Endothelial cell of umbilical vein (primary cell): ENCODE measurements at regions of chr9 and their contacts with region 1.

Region 1: GRCh38 chr9:110069326-110070248 is 138.4 kb downstream of the C9orf152 start:
- DNase-seq: peak; percentile 93
- H3K4me3 ChIP-seq: no peak overlapping the region
- H3K27ac ChIP-seq: peak overlapping the region; percentile 91
- H3K4me1 ChIP-seq: peaks cover 70% of the 10 kb centered on the region
- H3K27me3 ChIP-seq: no peaks in the 10 kb centered on the region
- CTCF ChIP-seq: no peak
- POLR2A ChIP-seq: no peak

Region 2: GRCh38 chr9:110088099-110088498 is 18.5 kb after region 1 on chr9:
- CTCF ChIA-PET with region 1: interaction called, 5 read pairs
- POLR2A ChIA-PET with region 1: interaction called, 3 read pairs
- dilution Hi-C with region 1: no loop called
- intact Hi-C with region 1: loop called (anchors 1 kb)
- DNase-seq: no peak
- H3K4me3 ChIP-seq: no peak overlapping the region
- H3K27ac ChIP-seq: no peak overlapping the region
- H3K4me1 ChIP-seq: peaks cover 34% of the 10 kb centered on the region
- H3K27me3 ChIP-seq: no peaks in the 10 kb centered on the region
- CTCF ChIP-seq: no peak
- POLR2A ChIP-seq: no peak

Region 3: GRCh38 chr9:110115341-110115820 is 45.8 kb after region 1 on chr9:
- CTCF ChIA-PET with region 1: interaction called, 4 read pairs
- POLR2A ChIA-PET with region 1: no interaction called
- dilution Hi-C with region 1: no loop called
- intact Hi-C with region 1: loop called (anchors 2 kb)
- DNase-seq: peak; percentile 59
- H3K4me3 ChIP-seq: no peak overlapping the region
- H3K27ac ChIP-seq: peak overlapping the region; percentile 36
- H3K4me1 ChIP-seq: peaks cover 28% of the 10 kb centered on the region
- H3K27me3 ChIP-seq: no peaks in the 10 kb centered on the region
- CTCF ChIP-seq: no peak
- POLR2A ChIP-seq: no peak

Region 4: DNA sequence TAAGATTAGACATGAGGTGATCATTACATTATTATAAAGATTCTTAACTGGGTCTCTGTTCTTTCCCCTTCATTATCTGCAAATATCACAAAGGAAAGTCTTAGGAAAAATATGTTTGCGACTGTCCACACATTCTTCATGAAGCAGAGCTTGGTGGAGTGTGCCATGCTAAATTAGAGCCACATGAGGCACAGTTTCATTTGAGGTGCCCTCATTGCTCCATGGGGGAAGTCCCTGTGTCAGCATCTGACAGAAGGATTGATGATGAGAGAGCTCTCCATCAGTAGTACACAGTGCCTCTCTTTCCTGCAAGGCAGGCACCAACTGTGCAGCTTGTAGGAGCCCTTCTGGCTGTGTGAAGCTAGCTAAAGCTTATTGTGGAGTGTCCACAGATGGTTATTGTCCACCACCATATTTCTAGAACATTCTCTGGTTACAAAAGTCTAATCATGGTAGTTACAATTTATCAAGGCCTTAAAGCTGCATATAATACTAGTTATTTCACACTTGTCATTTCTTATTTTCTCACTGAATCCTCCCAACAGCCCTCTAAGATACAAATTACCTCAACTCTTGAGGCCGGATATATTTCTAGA is 74.5 kb after region 1 on chr9:
- CTCF ChIA-PET with region 1: interaction called, 5 read pairs
- POLR2A ChIA-PET with region 1: no interaction called
- dilution Hi-C with region 1: no loop called
- intact Hi-C with region 1: loop called (anchors 1 kb)
- DNase-seq: no peak
- H3K4me3 ChIP-seq: no peak overlapping the region
- H3K27ac ChIP-seq: peak overlapping the region; percentile 1
- H3K4me1 ChIP-seq: peaks cover 42% of the 10 kb centered on the region
- H3K27me3 ChIP-seq: no peaks in the 10 kb centered on the region
- CTCF ChIP-seq: no peak
- POLR2A ChIP-seq: no peak

Region 5: GRCh38 chr9:110161940-110162339 is 92.4 kb after region 1 on chr9:
- CTCF ChIA-PET with region 1: no interaction called
- POLR2A ChIA-PET with region 1: no interaction called
- dilution Hi-C with region 1: no loop called
- intact Hi-C with region 1: no loop called
- DNase-seq: no peak
- H3K4me3 ChIP-seq: no peak overlapping the region
- H3K27ac ChIP-seq: no peak overlapping the region
- H3K4me1 ChIP-seq: peaks cover 12% of the 10 kb centered on the region
- H3K27me3 ChIP-seq: no peaks in the 10 kb centered on the region
- CTCF ChIP-seq: no peak
- POLR2A ChIP-seq: no peak

Region 6: GRCh38 chr9:110256380-110257096 is 187.0 kb after region 1 on chr9 and contains the start of gene TXN:
- CTCF ChIA-PET with region 1: no interaction called
- POLR2A ChIA-PET with region 1: interaction called, 6 read pairs
- dilution Hi-C with region 1: no loop called
- intact Hi-C with region 1: loop called (anchors 10 kb)
- DNase-seq: peak; percentile 85
- H3K4me3 ChIP-seq: peak within 1 kb of the TSS; percentile 40 to 93 (median 77)
- H3K27ac ChIP-seq: peak within 1 kb of the TSS; percentile 67
- H3K4me1 ChIP-seq: peaks cover 23% of the 10 kb centered on the region
- H3K27me3 ChIP-seq: no peaks in the 10 kb centered on the region
- CTCF ChIP-seq: no peak
- POLR2A ChIP-seq: peak; percentile 96
- total RNA-seq, gene TXN: 280 and 286 TPM in 2 replicates

Region 7: DNA sequence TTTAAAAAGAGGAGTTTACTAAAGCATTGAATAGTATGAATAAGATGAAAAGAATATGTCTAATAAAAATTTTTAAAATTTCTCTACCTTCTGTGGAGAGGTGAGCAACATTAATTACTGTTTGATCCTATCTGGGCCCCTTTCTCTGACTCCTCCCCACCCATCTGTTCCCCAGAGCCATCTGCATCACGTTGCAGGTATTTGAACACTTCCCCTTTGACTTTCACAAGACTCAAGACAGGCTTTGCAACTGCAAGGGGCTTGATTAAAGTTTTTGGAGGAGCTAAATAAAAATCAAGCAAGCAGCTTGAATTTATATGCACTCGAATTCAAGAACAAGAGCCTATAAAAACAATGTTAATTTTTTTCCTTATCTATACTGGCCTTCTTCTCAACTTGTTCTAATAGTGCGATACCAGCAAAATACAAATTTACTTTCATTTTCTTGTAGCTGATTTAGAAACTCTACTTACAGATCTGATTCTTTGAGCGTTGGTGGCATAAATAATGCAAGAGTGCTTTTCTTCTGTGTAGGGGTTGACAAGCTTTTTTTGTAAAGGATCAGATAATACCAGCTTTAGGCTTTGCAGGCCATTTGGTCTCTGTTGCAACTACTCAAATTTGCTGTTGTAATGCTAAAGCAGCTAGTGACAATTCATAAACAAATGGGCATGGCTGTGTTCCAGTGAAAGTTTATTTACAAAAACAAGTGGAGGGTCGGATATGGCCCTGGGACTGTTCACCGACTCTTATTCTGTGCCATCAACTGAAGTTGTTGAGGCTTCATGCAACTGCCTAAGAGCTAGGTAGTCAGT is 246.9 kb after region 1 on chr9:
- CTCF ChIA-PET with region 1: no interaction called
- POLR2A ChIA-PET with region 1: no interaction called
- dilution Hi-C with region 1: no loop called
- intact Hi-C with region 1: no loop called
- DNase-seq: no peak
- H3K4me3 ChIP-seq: no peak overlapping the region
- H3K27ac ChIP-seq: no peak overlapping the region
- H3K4me1 ChIP-seq: no peaks in the 10 kb centered on the region
- H3K27me3 ChIP-seq: no peaks in the 10 kb centered on the region
- CTCF ChIP-seq: no peak
- POLR2A ChIP-seq: no peak